WTC11 (cell line): ENCODE measurements at regions of chr5 and their contacts with region 1.

Region 1: GRCh38 chr5:174910245-174910737 is 185.9 kb downstream of the MSX2 start:
- DNase-seq: peak; percentile 89
- ATAC-seq: peak; percentile 99
- H3K4me3 Mint-ChIP-seq: no peak overlapping the region
- H3K27ac Mint-ChIP-seq: no peak overlapping the region
- H3K4me1 Mint-ChIP-seq: peaks cover 8% of the 10 kb centered on the region
- H3K27me3 Mint-ChIP-seq: no peaks in the 10 kb centered on the region; the same call in 1 of the 2 replicates
- CTCF ChIP-seq: peak; percentile 96

Region 2: DNA sequence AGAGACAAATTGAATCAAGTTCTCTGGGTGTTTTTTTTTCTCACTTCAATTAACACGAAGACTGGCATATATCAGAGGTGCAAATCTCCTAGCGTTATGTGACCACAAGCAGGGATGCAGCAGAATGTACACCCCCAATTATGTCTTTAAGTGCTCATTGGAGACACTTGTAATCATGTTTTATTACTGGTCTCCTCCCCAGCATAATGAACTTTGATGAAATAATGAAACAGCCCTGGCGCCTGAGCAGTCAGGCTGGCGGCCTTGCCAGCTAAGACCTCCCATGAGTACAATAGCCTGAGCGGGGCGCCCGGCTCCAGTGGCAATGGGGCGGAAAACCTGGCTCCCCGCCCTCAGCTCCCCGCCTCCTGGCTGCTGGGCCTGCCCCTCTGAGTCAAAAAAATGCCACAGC is 395.3 kb before region 1 on chr5:
- CTCF ChIA-PET with region 1: no interaction called
- POLR2A ChIA-PET with region 1: no interaction called
- DNase-seq: no peak
- ATAC-seq: no peak
- H3K4me3 Mint-ChIP-seq: no peak overlapping the region
- H3K27ac Mint-ChIP-seq: no peak overlapping the region
- H3K4me1 Mint-ChIP-seq: peaks cover 8% of the 10 kb centered on the region
- H3K27me3 Mint-ChIP-seq: peaks cover 15% of the 10 kb centered on the region
- CTCF ChIP-seq: no peak

Region 3: GRCh38 chr5:174920906-174921550 is 10.7 kb after region 1 on chr5:
- CTCF ChIA-PET with region 1: interaction called, 42 read pairs
- POLR2A ChIA-PET with region 1: no interaction called
- DNase-seq: peak; percentile 60
- ATAC-seq: peak; percentile 82
- H3K4me3 Mint-ChIP-seq: peak overlapping the region; percentile 10
- H3K27ac Mint-ChIP-seq: peak overlapping the region; percentile 87
- H3K4me1 Mint-ChIP-seq: peaks cover 59% of the 10 kb centered on the region
- H3K27me3 Mint-ChIP-seq: peaks cover 2% of the 10 kb centered on the region
- CTCF ChIP-seq: no peak

Region 4: GRCh38 chr5:174935854-174936474 is 25.7 kb after region 1 on chr5:
- CTCF ChIA-PET with region 1: interaction called, 59 read pairs
- POLR2A ChIA-PET with region 1: no interaction called
- DNase-seq: peak; percentile 83
- ATAC-seq: peak; percentile 95
- H3K4me3 Mint-ChIP-seq: no peak overlapping the region
- H3K27ac Mint-ChIP-seq: no peak overlapping the region
- H3K4me1 Mint-ChIP-seq: peaks cover 6% of the 10 kb centered on the region
- H3K27me3 Mint-ChIP-seq: no peaks in the 10 kb centered on the region
- CTCF ChIP-seq: peak; percentile 87

Region 5: GRCh38 chr5:174951146-174951780 is 41.0 kb after region 1 on chr5:
- CTCF ChIA-PET with region 1: interaction called, 10 read pairs
- POLR2A ChIA-PET with region 1: no interaction called
- DNase-seq: peak; percentile 66
- ATAC-seq: peak; percentile 94
- H3K4me3 Mint-ChIP-seq: no peak overlapping the region
- H3K27ac Mint-ChIP-seq: no peak overlapping the region
- H3K4me1 Mint-ChIP-seq: no peaks in the 10 kb centered on the region
- H3K27me3 Mint-ChIP-seq: no peaks in the 10 kb centered on the region
- CTCF ChIP-seq: peak; percentile 91

Region 6: DNA sequence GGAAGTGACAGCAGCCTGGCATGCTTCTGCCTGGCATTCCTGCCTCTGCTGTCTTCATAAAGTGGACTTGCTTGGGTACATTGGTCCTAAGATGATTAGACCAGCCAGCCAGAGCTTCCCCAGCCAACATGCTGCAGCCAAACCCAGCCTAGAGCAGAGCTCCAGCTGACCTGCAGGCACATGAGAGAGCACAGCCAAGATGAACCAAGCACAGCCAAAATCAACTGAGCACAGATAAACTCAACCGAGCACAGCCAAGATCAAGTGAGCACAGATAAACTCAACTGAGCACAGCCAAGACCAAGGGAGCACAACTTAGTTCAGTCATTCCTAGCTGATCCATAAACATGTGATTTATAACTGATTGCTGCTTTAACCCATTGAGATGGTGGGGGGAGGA is 80.6 kb after region 1 on chr5:
- CTCF ChIA-PET with region 1: no interaction called
- POLR2A ChIA-PET with region 1: no interaction called
- DNase-seq: no peak
- ATAC-seq: no peak
- H3K4me3 Mint-ChIP-seq: no peak overlapping the region
- H3K27ac Mint-ChIP-seq: no peak overlapping the region
- H3K4me1 Mint-ChIP-seq: no peaks in the 10 kb centered on the region
- H3K27me3 Mint-ChIP-seq: peaks cover 2% of the 10 kb centered on the region; the same call in 1 of the 2 replicates
- CTCF ChIP-seq: no peak